Right ventricle myocardium superior (tissue), 1 donor: ENCODE measurements at regions of chr11 and their contacts with region 1.

Region 1: DNA sequence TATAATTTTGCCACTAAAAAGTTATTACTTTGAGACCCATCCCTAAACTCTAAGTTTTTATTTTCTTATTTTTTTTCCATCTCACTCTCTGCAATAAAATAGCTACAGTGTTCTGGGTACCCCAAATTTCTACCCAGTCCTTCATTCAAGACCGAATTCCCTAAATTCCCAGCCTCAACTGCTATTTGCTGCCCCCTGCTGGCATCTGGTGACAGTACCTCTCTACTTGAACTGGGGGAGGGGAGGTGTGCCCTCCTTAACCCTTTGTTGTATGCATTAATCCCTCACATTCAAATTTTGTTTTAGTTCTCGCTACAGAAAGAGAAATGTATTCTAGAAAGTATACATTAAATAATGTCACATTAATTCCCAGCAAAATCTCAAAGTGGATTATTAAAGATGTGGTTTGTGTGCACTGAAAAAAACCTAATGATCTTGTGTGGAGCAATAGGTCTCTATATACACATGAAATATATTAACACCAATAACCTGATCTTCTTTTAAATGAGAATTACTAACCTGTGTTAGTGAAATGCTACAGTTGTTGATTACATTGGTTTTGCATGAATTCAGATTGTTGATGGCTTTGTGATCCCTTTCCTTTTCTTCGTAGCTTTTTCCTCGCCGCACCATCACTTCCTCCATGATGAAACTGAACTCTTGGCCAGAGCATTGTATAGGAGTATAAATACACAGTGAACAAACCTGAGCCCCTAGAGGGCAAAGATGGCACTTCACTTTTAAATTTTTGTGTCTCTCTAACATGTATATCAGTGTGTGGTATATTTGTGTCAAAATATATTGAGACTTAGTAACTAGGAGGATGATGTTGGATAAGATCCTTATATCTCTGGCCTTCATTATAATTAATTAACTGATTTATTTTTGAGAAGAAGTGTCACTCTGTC is 590.0 kb downstream of the METTL15 start:
- DNase-seq: peak; percentile 44
- ATAC-seq: peak; percentile 61

Region 2: DNA sequence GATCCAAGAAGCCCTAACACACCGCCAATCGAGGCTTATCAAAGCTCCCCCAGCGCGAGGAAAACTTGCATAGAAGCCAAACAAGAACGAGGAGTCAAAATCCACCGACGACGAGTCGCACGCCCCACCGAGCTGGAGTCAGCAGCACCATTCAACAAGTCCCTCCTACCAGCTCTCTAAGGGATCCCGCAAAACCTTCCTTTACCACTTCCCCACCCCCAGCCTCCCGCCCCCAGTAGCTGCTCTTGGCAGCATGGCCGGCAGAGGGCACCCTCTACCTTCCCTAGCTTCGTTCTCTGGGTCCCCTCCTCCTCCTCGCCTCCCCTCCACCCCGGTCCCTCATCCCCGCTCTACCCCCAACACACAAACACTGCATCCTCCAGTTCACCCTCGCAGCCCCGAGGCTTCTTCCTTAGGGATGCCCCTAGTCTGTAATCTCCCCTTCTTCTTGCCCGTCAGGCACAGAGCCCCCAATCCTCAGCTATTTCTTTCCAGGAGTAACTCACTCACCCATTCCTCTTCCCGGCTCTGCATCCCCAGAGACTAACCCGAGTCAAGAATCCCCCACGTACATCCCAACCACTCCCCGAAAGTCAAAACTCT is 999.2 kb before region 1 on chr11:
- intact Hi-C with region 1: loop called (anchors 5 kb)
- DNase-seq: peak; percentile 83
- ATAC-seq: peak; percentile 93

Region 3: DNA sequence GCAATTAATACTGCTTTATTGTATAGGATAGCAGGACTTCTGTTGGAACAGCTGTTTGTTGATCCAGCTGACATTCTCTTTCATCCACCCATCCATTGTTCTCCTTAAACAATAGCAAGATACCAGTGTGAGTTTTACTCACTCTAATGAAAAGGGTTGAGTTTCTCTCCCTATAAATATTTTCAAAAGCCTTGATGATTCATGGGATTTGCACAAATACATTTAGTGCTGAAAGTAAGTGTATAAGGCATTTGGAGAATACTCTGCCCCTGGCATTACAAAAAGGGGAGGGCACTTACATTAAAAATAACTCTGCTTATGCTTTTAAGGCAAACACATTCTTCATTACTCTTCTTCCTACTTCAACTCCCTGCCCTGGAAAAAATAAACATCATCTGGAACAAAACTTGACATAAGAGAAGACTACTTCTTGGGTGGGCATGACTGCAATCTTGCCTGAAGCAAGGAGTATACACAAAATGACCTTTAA is 44.9 kb after region 1 on chr11:
- intact Hi-C with region 1: no loop called
- DNase-seq: no peak
- ATAC-seq: no peak